Activated CD4-positive, alpha-beta T cell treated with anti-CD3 and anti-CD28 coated beads for 36 hours (primary cell): ENCODE measurements at regions of chr20 and their contacts with region 1.

Region 1: GRCh38 chr20:49534255-49534712 is 33.7 kb downstream of the PTGIS start:
- DNase-seq: peak; percentile 79
- ATAC-seq: peak; percentile 74
- H3K4me3 Mint-ChIP-seq: no peak overlapping the region
- H3K27ac Mint-ChIP-seq: peak overlapping the region; percentile 65
- H3K4me1 Mint-ChIP-seq: peaks cover 15% of the 10 kb centered on the region
- H3K27me3 Mint-ChIP-seq: peaks cover 12% of the 10 kb centered on the region

Region 2: DNA sequence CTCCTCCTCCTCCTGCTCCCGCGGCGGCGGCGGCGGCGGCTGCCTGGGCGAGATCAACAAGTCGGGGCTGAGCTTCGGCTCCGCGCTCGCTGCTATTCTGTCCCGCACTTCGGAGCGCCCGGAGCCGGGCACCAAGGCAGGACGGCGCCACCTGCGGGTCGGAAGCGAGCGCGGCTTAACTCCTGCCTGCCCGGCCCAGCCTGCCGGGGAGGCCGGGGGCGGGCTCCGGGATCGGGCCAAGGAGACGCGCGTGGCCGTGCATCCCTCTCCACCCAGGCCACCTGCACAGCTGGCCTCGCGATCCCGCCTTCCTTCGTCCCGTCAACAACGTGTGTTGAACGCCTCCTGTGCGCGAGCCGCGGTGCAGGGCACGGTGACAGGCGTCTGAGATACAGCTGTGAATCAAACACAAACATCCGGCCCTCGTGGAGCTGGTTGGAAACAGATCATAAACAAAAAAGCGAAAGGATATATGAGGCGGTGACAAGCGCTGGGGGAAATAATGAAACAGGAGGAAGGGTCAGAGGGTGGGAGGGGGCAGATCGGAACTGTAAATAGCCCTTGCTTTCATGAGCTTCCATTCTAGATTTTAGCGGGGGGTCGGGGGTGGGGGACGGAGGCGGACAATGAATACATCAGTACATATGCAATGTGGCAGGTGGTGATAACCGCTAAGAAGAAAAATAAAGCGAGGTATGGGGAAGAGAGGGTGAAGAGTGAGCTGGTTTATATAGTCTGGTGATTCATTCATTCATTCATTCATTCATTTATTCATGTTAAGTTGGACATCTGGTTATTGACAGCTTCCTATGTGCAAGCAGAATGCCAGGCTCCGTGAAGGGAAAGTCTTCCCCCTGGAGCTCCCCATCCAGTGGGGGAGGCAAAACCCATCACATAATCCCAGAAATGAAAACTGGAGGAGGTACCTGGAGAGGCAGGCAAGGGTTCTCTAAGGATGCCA is 49.8 kb before region 1 on chr20:
- CTCF ChIA-PET with region 1: interaction called, 11 read pairs
- POLR2A ChIA-PET with region 1: no interaction called
- intact Hi-C with region 1: loop called (anchors 2 to 5 kb)
- DNase-seq: peak; percentile 87
- ATAC-seq: peak; percentile 95
- H3K4me3 Mint-ChIP-seq: peak overlapping the region; percentile 69
- H3K27ac Mint-ChIP-seq: peak overlapping the region; percentile 14
- H3K4me1 Mint-ChIP-seq: peaks cover 6% of the 10 kb centered on the region
- H3K27me3 Mint-ChIP-seq: peaks cover 53% of the 10 kb centered on the region

Region 3: DNA sequence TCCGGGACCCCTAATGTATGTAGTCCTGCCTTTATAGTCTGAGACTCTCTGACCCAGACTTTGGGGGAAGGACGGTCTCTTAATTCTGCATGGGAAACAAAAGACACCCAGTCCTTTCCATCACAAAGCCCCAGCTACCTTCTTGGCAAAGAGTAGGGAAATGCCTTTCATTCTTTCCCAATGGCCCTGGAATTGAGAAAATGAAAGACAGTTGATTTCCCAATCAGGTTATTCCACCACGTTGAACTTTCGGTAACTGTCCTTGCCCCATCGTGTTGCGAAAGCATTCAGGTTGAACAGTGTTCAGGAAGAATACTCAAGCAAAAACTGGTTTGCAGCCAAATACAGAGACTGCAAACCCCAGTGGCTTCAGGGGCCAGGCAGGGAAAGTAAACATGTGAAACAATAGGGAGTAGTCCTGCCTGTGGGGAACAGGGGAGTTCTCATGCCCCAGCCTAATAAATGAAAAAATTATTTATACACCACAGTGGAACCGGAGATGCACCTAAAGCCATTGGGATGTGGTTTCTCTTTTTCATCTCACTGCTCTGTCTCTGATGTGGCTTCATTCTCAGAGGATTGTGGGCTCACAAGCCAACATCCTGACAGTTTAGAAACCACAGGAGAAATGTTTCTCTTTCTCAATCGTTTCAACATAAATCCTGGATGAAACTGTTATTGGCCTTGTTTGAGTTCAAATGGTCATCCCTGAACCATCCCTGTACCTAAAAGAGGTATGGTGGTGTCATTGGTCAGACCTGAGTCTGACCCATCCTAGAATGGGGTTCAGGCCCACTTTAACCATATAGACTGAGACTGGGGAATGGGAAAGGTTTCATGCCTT is 234.1 kb after region 1 on chr20:
- CTCF ChIA-PET with region 1: no interaction called
- POLR2A ChIA-PET with region 1: no interaction called
- intact Hi-C with region 1: no loop called
- DNase-seq: peak; percentile 13
- ATAC-seq: peak; percentile 46
- H3K4me3 Mint-ChIP-seq: no peak overlapping the region
- H3K27ac Mint-ChIP-seq: no peak overlapping the region
- H3K4me1 Mint-ChIP-seq: peaks cover 16% of the 10 kb centered on the region
- H3K27me3 Mint-ChIP-seq: peaks cover 47% of the 10 kb centered on the region

Region 4: GRCh38 chr20:49823152-49823847 is 289.0 kb after region 1 on chr20:
- CTCF ChIA-PET with region 1: no interaction called
- POLR2A ChIA-PET with region 1: no interaction called
- intact Hi-C with region 1: no loop called
- DNase-seq: no peak
- ATAC-seq: peak; percentile 89
- H3K4me3 Mint-ChIP-seq: peak overlapping the region; percentile 5
- H3K27ac Mint-ChIP-seq: peak overlapping the region; percentile 71
- H3K4me1 Mint-ChIP-seq: peaks cover 43% of the 10 kb centered on the region
- H3K27me3 Mint-ChIP-seq: no peaks in the 10 kb centered on the region